GM18951 (cell line): ENCODE measurements at regions of chr7 and their contacts with region 1.

Region 1: GRCh38 chr7:116786791-116787443 is 75.5 kb upstream of the CAPZA2 start:
- POLR2A ChIP-seq: no peak

Region 2: DNA sequence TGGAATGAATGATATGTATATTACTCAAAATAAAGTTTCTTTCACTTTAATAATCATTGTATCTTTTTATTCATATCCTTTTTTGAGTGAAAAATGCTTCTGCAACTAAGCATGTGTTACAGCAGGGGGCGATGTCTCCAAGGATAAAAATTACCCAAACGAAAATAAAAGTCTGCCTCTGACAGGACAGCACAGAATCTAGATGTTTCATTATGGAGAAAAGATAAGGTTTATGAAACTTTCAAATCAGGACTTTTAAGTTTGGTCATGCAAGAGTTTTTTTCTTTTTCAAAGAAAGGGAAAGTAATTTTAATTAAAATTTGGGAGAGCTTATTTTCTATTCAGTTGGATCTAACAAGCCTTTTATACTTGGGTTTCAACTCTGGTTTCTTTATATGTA is 528.2 kb before region 1 on chr7:
- in situ Hi-C with region 1: loop called (anchors 25 kb)
- POLR2A ChIP-seq: no peak

Region 3: DNA sequence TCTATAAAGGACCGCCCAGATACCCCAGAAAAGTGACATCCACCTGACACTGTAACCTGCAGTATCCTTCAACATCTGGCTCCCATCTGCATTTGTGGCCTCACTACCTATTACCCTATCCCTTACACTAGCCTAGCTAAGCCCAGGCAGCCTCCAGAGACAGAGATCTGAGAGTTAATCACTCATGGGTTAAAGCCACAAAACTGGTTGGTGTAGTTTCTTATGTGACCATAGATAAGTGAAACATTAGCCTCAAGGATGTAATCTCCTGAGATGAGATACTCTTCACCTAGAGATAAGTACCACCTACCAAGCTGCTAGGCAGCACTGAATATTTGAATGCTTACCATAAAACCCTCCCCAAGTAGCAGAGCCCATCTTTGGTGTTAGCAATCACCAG is 1050.9 kb after region 1 on chr7:
- in situ Hi-C with region 1: no loop called
- POLR2A ChIP-seq: no peak